Activated CD4-positive, alpha-beta T cell treated with anti-CD3 and anti-CD28 coated beads, Interleukin-2, amount 10 ng/mL, durations not matched to agents 24 days and 14 days (primary cell): ENCODE measurements at regions of chr1 and their contacts with region 1.

Region 1: GRCh38 chr1:2556277-2556677 is at the start of gene TNFRSF14:
- DNase-seq: peak; percentile 94
- H3K4me3 Mint-ChIP-seq: peak within 1 kb of the TSS; percentile 99
- H3K27ac Mint-ChIP-seq: peak within 1 kb of the TSS; percentile 98
- H3K4me1 Mint-ChIP-seq: peaks cover 25% of the 10 kb centered on the region
- H3K27me3 Mint-ChIP-seq: no peaks in the 10 kb centered on the region
- total RNA-seq, gene TNFRSF14: 207 and 209 TPM in 2 replicates

Region 2: DNA sequence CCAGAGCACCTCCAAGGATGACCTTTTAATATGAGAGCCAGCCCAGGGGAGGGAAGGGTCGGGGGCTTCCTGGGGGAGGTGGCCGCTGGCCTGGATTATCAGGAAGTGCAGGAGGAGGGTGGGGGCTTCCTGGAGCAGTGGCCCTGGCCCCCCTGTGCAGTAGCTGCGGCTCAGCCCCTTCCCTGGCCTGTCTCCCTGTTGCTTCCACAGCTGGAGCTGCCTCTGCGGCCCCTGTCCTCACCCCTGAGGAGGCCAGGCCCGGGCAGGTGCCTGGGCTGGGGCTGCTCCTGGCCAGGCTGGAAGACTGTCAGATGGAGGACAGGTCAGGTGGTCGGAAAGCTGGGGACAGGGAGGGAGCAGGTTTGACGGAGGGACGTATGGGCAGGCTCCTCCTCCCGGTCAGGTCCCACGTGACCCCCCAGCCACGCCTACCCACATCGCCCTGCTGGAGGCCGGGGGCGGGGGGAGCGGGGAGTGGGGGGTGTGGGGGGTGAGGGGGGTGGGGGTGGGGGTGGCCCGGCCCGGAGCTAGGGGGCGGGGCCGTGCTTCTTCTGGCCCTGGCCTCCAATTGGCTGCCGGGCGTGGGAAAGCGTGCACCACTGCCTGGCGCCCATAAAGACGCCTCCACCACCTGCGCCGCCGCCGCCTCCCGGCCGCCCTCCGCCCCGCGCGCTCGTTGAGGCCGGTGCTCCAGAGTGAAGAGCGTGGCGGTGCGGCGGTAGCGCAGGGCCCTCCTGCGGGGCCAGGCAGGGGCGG is 10.3 kb before region 1 on chr1:
- intact Hi-C with region 1: loop called (anchors 1 kb)
- DNase-seq: peak; percentile 97
- H3K4me3 Mint-ChIP-seq: peak overlapping the region; percentile 93
- H3K27ac Mint-ChIP-seq: peak overlapping the region; percentile 95
- H3K4me1 Mint-ChIP-seq: peaks cover 11% of the 10 kb centered on the region
- H3K27me3 Mint-ChIP-seq: peaks cover 8% of the 10 kb centered on the region

Region 3: GRCh38 chr1:2578758-2579118 is 22.5 kb after region 1 on chr1:
- intact Hi-C with region 1: loop called (anchors 1 kb)
- DNase-seq: no peak
- H3K4me3 Mint-ChIP-seq: peak overlapping the region; percentile 81
- H3K27ac Mint-ChIP-seq: peak overlapping the region; percentile 99
- H3K4me1 Mint-ChIP-seq: peaks cover 64% of the 10 kb centered on the region
- H3K27me3 Mint-ChIP-seq: no peaks in the 10 kb centered on the region